Activated B cell treated with CpG ODN at 0.5 μM for 24 hours (primary cell): ENCODE measurements at regions of chr3 and their contacts with region 1.

Region 1: DNA sequence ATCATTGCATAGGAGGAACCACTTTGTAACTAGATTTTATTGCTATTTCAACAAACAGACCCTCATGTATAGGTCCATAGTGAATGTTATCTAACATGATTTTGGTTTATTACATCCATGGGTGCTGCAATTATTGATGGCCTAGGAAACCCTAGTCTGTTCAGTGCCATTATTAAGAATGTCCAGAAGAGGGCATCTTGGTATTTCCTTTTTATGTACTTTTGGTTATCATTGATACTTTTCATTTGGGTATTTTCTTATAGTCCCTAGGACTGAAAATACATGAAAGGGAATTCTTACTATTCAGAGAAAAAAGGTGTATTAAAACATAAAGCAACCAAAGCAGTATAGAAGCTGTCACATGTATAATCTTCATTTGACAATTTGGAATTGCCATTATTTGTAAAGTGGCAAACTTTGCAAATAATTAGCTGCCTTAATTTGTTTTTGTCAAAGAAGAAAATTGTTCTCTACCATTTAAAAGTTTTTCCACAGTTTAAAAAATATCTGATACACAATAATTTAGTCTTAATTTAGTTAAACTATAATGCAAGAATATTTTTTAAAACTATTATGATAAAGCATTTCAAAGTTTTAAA is 48.7 kb downstream of the CNOT10 start:
- DNase-seq: no peak
- ATAC-seq: no peak
- H3K4me3 Mint-ChIP-seq: no peak overlapping the region
- H3K27ac Mint-ChIP-seq: no peak overlapping the region
- H3K4me1 Mint-ChIP-seq: no peaks in the 10 kb centered on the region
- H3K27me3 Mint-ChIP-seq: no peaks in the 10 kb centered on the region
- CTCF ChIP-seq: no peak

Region 2: DNA sequence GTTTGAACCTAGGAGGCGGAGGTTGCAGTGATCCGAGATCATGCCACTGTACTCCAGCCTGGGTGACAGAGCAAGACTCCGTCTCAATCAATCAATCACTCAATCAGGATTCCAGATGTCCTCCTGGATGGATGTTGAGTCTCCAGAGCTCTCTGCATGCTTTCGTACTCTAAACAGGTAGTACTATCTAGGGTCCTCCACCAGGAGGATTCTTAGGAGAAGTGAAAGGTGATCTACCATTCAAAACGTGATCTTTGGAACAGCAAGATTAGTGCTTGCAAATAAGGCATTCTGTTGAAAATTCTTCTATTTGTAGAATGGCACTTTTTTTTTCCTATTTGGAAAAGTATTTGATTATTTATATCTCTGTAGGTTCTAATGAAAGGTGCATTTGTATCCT is 14.4 kb before region 1 on chr3:
- CTCF ChIA-PET with region 1: no interaction called
- POLR2A ChIA-PET with region 1: no interaction called
- intact Hi-C with region 1: no loop called
- DNase-seq: no peak
- ATAC-seq: no peak
- H3K4me3 Mint-ChIP-seq: no peak overlapping the region
- H3K27ac Mint-ChIP-seq: no peak overlapping the region
- H3K4me1 Mint-ChIP-seq: no peaks in the 10 kb centered on the region
- H3K27me3 Mint-ChIP-seq: no peaks in the 10 kb centered on the region
- CTCF ChIP-seq: no peak

Region 3: GRCh38 chr3:32781210-32781968 is 47.7 kb after region 1 on chr3:
- CTCF ChIA-PET with region 1: interaction called, 3 read pairs
- POLR2A ChIA-PET with region 1: no interaction called
- intact Hi-C with region 1: loop called (anchors 2 kb)
- DNase-seq: peak; percentile 71
- ATAC-seq: peak; percentile 91
- H3K4me3 Mint-ChIP-seq: peak overlapping the region; percentile 90
- H3K27ac Mint-ChIP-seq: no peak overlapping the region
- H3K4me1 Mint-ChIP-seq: peaks cover 5% of the 10 kb centered on the region
- H3K27me3 Mint-ChIP-seq: no peaks in the 10 kb centered on the region
- CTCF ChIP-seq: peak; percentile 80

Region 4: GRCh38 chr3:32934150-32934742 is 200.5 kb after region 1 on chr3:
- CTCF ChIA-PET with region 1: interaction called, 4 read pairs
- POLR2A ChIA-PET with region 1: no interaction called
- intact Hi-C with region 1: loop called (anchors 1 kb)
- DNase-seq: no peak
- ATAC-seq: no peak
- H3K4me3 Mint-ChIP-seq: no peak overlapping the region
- H3K27ac Mint-ChIP-seq: no peak overlapping the region
- H3K4me1 Mint-ChIP-seq: no peaks in the 10 kb centered on the region
- H3K27me3 Mint-ChIP-seq: peaks cover 9% of the 10 kb centered on the region
- CTCF ChIP-seq: no peak